WTC11 (cell line): ENCODE measurements at regions of chr14 and their contacts with region 1.

Region 1: GRCh38 chr14:21978184-21978998 is 304.8 kb upstream of the OR4E1 start:
- DNase-seq: peak; percentile 67
- ATAC-seq: peak; percentile 93
- H3K4me3 Mint-ChIP-seq: no peak overlapping the region
- H3K27ac Mint-ChIP-seq: no peak overlapping the region
- H3K4me1 Mint-ChIP-seq: no peaks in the 10 kb centered on the region
- H3K27me3 Mint-ChIP-seq: peaks cover 30% of the 10 kb centered on the region
- CTCF ChIP-seq: peak; percentile 87

Region 2: GRCh38 chr14:21874167-21874566 is 104.2 kb before region 1 on chr14:
- CTCF ChIA-PET with region 1: interaction called, 13 read pairs
- POLR2A ChIA-PET with region 1: no interaction called
- DNase-seq: no peak
- ATAC-seq: no peak
- H3K4me3 Mint-ChIP-seq: no peak overlapping the region
- H3K27ac Mint-ChIP-seq: no peak overlapping the region
- H3K4me1 Mint-ChIP-seq: no peaks in the 10 kb centered on the region
- H3K27me3 Mint-ChIP-seq: peaks cover 16% of the 10 kb centered on the region
- CTCF ChIP-seq: no peak

Region 3: DNA sequence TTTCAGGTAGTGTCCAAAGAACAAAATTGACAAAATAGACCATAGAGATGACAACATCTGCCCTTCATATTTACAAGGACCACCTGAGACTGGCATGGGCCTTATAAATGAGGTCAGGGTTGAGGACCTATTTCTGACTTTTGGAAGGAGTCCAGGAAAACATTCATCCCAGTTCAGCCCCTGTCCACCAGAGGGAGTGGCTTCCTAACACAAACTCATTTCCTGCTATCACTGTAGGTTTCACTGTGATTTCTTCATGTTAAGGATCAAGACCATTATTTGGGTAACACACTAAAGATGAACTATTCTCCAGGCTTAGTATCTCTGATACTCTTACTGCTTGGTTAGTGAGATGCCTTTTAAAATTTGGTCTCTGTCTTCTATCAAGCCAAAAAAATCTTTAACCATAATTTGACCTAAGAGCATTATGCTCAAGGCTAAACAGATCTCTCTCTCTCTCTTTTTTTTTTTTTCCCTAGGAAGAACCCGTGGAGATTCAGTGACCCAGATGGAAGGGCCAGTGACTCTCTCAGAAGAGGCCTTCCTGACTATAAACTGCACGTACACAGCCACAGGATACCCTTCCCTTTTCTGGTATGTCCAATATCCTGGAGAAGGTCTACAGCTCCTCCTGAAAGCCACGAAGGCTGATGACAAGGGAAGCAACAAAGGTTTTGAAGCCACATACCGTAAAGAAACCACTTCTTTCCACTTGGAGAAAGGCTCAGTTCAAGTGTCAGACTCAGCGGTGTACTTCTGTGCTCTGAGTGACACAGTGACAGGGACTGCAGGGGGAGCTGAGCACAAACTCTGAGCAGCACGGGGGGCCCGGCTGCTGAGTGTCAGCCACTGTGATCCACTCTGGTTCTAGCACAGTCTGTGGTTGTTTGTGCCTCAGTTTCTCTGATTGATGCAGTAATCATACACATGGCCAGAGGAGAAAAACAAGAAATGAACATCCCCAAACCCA is 37.2 kb before region 1 on chr14:
- CTCF ChIA-PET with region 1: interaction called, 18 read pairs
- POLR2A ChIA-PET with region 1: no interaction called
- DNase-seq: peak; percentile 36
- ATAC-seq: peak; percentile 76
- H3K4me3 Mint-ChIP-seq: no peak overlapping the region
- H3K27ac Mint-ChIP-seq: no peak overlapping the region
- H3K4me1 Mint-ChIP-seq: peaks cover 13% of the 10 kb centered on the region
- H3K27me3 Mint-ChIP-seq: no peaks in the 10 kb centered on the region; the same call in 1 of the 2 replicates
- CTCF ChIP-seq: peak; percentile 57

Region 4: DNA sequence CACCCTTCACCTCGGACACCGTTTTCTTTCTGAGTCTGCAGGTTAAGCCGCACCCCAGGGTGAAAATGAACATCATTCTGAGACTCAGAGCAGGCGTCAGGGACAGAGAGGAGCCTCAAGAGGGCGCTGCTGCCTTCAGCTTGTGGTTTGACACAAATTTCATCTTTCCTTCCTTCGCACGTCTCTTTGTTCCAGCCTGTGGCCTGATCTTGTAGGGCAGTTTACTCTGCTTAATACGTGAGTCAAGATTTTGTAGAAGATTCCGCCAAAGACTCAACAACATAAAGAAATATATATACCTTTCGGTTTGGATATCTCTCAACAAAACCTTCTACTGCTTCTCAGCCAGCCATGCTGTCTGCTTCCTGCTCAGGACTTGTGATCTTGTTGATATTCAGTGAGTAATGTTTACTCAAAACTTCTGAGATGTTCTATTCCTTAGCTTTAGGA is 24.5 kb after region 1 on chr14:
- CTCF ChIA-PET with region 1: interaction called, 119 read pairs
- POLR2A ChIA-PET with region 1: interaction called, 3 read pairs
- DNase-seq: peak; percentile 76
- ATAC-seq: peak; percentile 85
- H3K4me3 Mint-ChIP-seq: no peak overlapping the region
- H3K27ac Mint-ChIP-seq: no peak overlapping the region
- H3K4me1 Mint-ChIP-seq: no peaks in the 10 kb centered on the region; the same call in 1 of the 2 replicates
- H3K27me3 Mint-ChIP-seq: peaks cover 14% of the 10 kb centered on the region
- CTCF ChIP-seq: peak; percentile 58

Region 5: GRCh38 chr14:22026527-22026926 is 48.1 kb after region 1 on chr14:
- CTCF ChIA-PET with region 1: interaction called, 14 read pairs
- POLR2A ChIA-PET with region 1: no interaction called
- DNase-seq: no peak
- ATAC-seq: no peak
- H3K4me3 Mint-ChIP-seq: no peak overlapping the region
- H3K27ac Mint-ChIP-seq: no peak overlapping the region
- H3K4me1 Mint-ChIP-seq: no peaks in the 10 kb centered on the region
- H3K27me3 Mint-ChIP-seq: peaks cover 5% of the 10 kb centered on the region; the same call in 1 of the 2 replicates
- CTCF ChIP-seq: no peak

Region 6: GRCh38 chr14:22099942-22100763 is 121.8 kb after region 1 on chr14:
- CTCF ChIA-PET with region 1: interaction called, 29 read pairs
- POLR2A ChIA-PET with region 1: no interaction called
- DNase-seq: peak; percentile 75
- ATAC-seq: peak; percentile 100
- H3K4me3 Mint-ChIP-seq: no peak overlapping the region
- H3K27ac Mint-ChIP-seq: no peak overlapping the region
- H3K4me1 Mint-ChIP-seq: no peaks in the 10 kb centered on the region
- H3K27me3 Mint-ChIP-seq: peaks cover 10% of the 10 kb centered on the region
- CTCF ChIP-seq: 0 out of 2 replicates have a peak, but pooled peaks have one; percentile 16

Region 7: GRCh38 chr14:22190411-22191191 is 212.2 kb after region 1 on chr14:
- CTCF ChIA-PET with region 1: no interaction called
- POLR2A ChIA-PET with region 1: no interaction called
- DNase-seq: no peak
- ATAC-seq: no peak
- H3K4me3 Mint-ChIP-seq: no peak overlapping the region
- H3K27ac Mint-ChIP-seq: no peak overlapping the region
- H3K4me1 Mint-ChIP-seq: no peaks in the 10 kb centered on the region
- H3K27me3 Mint-ChIP-seq: no peaks in the 10 kb centered on the region
- CTCF ChIP-seq: no peak

Region 8: DNA sequence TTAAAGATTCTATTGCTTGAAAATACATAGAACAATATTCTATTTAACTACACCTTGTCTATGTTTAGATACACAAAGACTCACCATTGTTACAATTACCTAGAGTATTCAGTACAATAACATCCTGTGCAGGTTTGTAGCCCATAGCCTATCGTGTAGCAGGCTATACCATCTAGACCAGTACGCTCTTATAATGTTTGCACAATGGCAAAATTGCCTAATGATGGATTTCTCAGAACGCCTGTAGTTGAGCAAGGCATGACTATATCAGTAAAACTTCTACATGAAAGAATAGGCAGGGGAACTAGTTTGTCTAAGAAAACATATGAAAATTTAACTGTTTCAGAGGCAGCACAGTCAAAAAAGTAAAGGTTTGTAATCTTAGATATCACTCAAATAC is 234.7 kb after region 1 on chr14:
- CTCF ChIA-PET with region 1: no interaction called
- POLR2A ChIA-PET with region 1: no interaction called
- DNase-seq: no peak
- ATAC-seq: no peak
- H3K4me3 Mint-ChIP-seq: no peak overlapping the region
- H3K27ac Mint-ChIP-seq: no peak overlapping the region
- H3K4me1 Mint-ChIP-seq: no peaks in the 10 kb centered on the region
- H3K27me3 Mint-ChIP-seq: no peaks in the 10 kb centered on the region
- CTCF ChIP-seq: no peak

Region 9: GRCh38 chr14:22231018-22231417 is 252.6 kb after region 1 on chr14:
- CTCF ChIA-PET with region 1: no interaction called
- POLR2A ChIA-PET with region 1: no interaction called
- DNase-seq: no peak
- ATAC-seq: no peak
- H3K4me3 Mint-ChIP-seq: no peak overlapping the region
- H3K27ac Mint-ChIP-seq: no peak overlapping the region
- H3K4me1 Mint-ChIP-seq: peaks cover 22% of the 10 kb centered on the region
- H3K27me3 Mint-ChIP-seq: peaks cover 3% of the 10 kb centered on the region; the same call in 1 of the 2 replicates
- CTCF ChIP-seq: no peak

Region 10: GRCh38 chr14:22519877-22520685 is 541.7 kb after region 1 on chr14:
- CTCF ChIA-PET with region 1: no interaction called
- POLR2A ChIA-PET with region 1: no interaction called
- DNase-seq: no peak
- ATAC-seq: no peak
- H3K4me3 Mint-ChIP-seq: no peak overlapping the region
- H3K27ac Mint-ChIP-seq: no peak overlapping the region
- H3K4me1 Mint-ChIP-seq: peaks cover 11% of the 10 kb centered on the region
- H3K27me3 Mint-ChIP-seq: no peaks in the 10 kb centered on the region
- CTCF ChIP-seq: no peak